Psoas muscle (tissue), 8 donors: ENCODE measurements at regions of chr12 and their contacts with region 1.

Region 1: DNA sequence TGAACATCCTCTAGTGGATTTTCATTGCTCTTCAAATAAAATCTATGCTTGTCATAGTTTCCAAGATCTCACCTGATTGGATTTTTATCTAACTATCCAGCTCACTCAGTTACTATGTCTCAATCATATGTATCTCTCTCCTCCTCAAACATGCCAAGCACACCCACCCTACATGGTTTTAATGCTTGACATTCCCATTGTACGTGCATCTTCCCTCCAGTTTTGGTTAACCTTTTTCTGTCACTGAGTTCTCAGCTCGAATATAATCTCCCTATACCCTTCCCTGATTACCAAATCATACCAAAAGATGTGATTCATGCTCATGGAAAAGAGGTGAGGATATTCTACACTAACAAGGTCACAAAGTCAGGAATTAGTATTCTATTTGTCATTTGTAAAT is 12.0 kb upstream of the PTPRQ start:
- DNase-seq: no peak
- ATAC-seq: no peak
- H3K4me3 ChIP-seq: no peak overlapping the region
- H3K27ac ChIP-seq: no peak overlapping the region
- H3K4me1 ChIP-seq: no peaks in the 10 kb centered on the region
- H3K27me3 ChIP-seq: no peaks in the 10 kb centered on the region
- CTCF ChIP-seq: no peak

Region 2: DNA sequence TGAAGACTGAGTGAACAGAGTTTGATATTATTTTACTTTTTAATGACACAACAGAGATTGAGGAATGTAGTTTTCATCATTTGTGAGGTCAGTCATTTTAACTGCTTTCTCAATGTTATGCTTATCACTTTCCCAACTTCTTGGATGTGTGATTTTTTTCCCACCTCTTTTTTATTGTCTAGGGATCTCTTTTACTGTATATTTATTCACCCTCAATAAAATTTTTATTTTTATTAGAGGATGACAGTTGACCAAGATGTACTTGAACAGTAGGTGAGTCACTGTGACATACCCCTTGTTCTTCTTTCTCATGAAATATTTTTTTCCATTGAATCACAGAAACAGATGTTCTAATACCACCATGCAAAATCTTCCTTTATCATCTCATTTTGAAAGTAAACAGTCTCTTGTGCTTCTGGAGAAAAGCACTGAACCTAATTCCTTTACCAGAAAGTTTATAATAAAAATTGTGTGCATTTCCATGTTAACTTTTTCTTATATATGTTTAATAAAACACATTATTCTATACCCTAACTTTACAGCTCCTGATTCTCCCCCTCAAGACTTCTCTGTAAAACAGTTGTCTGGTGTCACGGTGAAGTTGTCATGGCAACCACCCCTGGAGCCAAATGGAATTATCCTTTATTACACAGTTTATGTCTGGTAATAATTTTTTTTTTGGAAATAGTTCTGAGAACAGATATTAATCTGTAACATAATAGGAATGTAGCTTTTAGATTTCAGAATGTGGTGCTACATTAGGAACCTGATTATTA is 77.9 kb after region 1 on chr12:
- intact Hi-C with region 1: loop called in 1 of 2 experiments (anchors 10 kb)
- DNase-seq: no peak
- ATAC-seq: no peak
- H3K4me3 ChIP-seq: no peak overlapping the region
- H3K27ac ChIP-seq: no peak overlapping the region
- H3K4me1 ChIP-seq: no peaks in the 10 kb centered on the region
- H3K27me3 ChIP-seq: no peaks in the 10 kb centered on the region
- CTCF ChIP-seq: no peak